Activated CD4-positive, alpha-beta memory T cell treated with anti-CD3 and anti-CD28 coated beads, Interleukin-2, amount 10 ng/mL, durations not matched to agents 7 days and 5 days (primary cell): ENCODE measurements at regions of chr19 and their contacts with region 1.

Region 1: GRCh38 chr19:18542936-18543815 is at the start of gene FKBP8:
- DNase-seq: peak; percentile 96
- H3K4me3 Mint-ChIP-seq: peak within 1 kb of the TSS; percentile 95
- H3K27ac Mint-ChIP-seq: peak within 1 kb of the TSS; percentile 98
- H3K4me1 Mint-ChIP-seq: peaks cover 31% of the 10 kb centered on the region
- H3K27me3 Mint-ChIP-seq: no peaks in the 10 kb centered on the region
- total RNA-seq, gene FKBP8: 263 TPM

Region 2: GRCh38 chr19:18532168-18532890 is 10.8 kb before region 1 on chr19:
- CTCF ChIA-PET with region 1: no interaction called
- POLR2A ChIA-PET with region 1: interaction called, 11 read pairs
- DNase-seq: no peak
- H3K4me3 Mint-ChIP-seq: no peak overlapping the region
- H3K27ac Mint-ChIP-seq: no peak overlapping the region
- H3K4me1 Mint-ChIP-seq: no peaks in the 10 kb centered on the region
- H3K27me3 Mint-ChIP-seq: no peaks in the 10 kb centered on the region

Region 3: DNA sequence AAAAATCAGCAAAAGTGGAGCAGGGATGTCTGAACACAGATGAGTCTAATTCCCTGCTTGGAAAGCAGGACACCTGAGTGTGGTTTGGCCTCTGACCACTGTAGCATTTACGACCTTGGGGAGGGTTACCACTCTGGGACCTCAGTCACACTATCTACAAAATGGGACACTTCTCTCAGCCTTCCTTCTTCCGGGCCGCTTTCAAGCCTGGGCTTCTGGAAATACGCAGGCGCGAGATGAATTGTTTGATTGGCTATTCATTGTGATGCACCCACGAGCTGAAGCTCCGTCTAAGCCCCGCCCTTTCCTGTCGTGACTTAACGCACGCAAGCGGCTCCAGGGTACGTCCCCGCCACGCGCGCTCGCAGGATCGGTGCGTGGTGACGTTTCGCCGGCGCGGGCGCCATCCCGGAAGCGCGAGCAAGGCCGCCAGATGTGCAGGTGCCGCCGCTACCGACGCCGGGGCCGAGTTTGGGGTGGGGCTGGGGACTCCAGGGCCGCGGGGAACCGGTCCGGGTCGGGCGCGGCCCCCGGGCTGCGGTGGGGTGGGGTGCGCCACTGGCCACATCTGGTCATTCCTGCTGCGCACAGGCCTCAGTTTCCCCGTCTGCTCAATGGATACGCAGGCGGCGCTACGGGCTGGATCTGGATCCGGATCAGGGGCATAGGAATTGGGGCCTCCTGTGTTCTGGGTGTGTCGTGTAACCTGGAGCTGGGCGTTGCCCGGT is 14.5 kb after region 1 on chr19 and contains the start of gene KXD1:
- CTCF ChIA-PET with region 1: interaction called, 26 read pairs
- POLR2A ChIA-PET with region 1: interaction called, 80 read pairs
- DNase-seq: peak; percentile 99
- H3K4me3 Mint-ChIP-seq: peak within 1 kb of the TSS; percentile 95
- H3K27ac Mint-ChIP-seq: peak within 1 kb of the TSS; percentile 87
- H3K4me1 Mint-ChIP-seq: peaks cover 22% of the 10 kb centered on the region
- H3K27me3 Mint-ChIP-seq: no peaks in the 10 kb centered on the region
- total RNA-seq, gene KXD1: 93.0 to 99.1 TPM

Region 4: DNA sequence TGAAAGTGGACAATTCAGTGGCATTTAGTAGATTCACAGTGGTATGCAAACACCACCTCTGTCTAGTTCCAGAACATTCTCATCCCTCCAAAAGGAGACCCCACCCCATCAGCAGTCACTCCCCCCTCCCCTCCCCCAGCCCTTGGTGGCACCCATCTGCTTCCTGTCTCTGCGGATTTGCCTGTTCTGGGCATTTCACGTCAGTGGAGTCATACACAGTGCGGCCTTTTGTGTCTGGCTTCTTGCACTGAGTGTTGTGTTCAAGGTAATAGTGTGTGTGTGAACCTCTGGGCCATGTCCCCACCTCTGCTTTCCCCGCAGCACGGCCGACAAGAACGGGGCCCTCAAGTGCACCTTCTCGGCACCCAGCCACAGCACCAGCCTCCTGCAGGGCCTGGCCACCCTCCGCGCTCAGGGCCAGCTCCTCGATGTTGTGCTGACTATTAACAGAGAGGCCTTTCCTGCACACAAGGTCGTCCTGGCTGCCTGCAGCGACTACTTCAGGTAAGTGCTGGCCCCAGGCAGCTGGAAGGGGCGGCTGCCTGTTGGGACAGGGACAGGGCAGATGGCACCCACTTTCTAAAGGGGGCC is 120.9 kb after region 1 on chr19:
- CTCF ChIA-PET with region 1: no interaction called
- POLR2A ChIA-PET with region 1: no interaction called
- DNase-seq: no peak
- H3K4me3 Mint-ChIP-seq: no peak overlapping the region
- H3K27ac Mint-ChIP-seq: no peak overlapping the region
- H3K4me1 Mint-ChIP-seq: peaks cover 8% of the 10 kb centered on the region
- H3K27me3 Mint-ChIP-seq: no peaks in the 10 kb centered on the region

Region 5: GRCh38 chr19:18700501-18701249 is 157.5 kb after region 1 on chr19:
- CTCF ChIA-PET with region 1: no interaction called
- POLR2A ChIA-PET with region 1: no interaction called
- DNase-seq: peak; percentile 66
- H3K4me3 Mint-ChIP-seq: peak overlapping the region; percentile 72
- H3K27ac Mint-ChIP-seq: peak overlapping the region; percentile 63
- H3K4me1 Mint-ChIP-seq: peaks cover 24% of the 10 kb centered on the region
- H3K27me3 Mint-ChIP-seq: no peaks in the 10 kb centered on the region